Naive thymus-derived CD4-positive, alpha-beta T cell (primary cell): ENCODE measurements at regions of chr10 and their contacts with region 1.

Region 1: GRCh38 chr10:96719850-96720421 is 378 bp downstream of the PIK3AP1 start:
- DNase-seq: peak in 5 of 9 donors; percentile 2 to 52 (median 15)
- ATAC-seq: peak; percentile 77
- H3K4me3 ChIP-seq: peak overlapping the region; percentile 58
- H3K4me3 Mint-ChIP-seq: peak overlapping the region; percentile 84 to 98 (median 92)
- H3K27ac ChIP-seq: no peak overlapping the region
- H3K27ac Mint-ChIP-seq: peak overlapping the region in 7 of 9 donors; percentile 20 to 77 (median 69)
- H3K4me1 ChIP-seq: peaks cover 6 to 20% of the 10 kb centered on the region in 2 donors
- H3K4me1 Mint-ChIP-seq: peaks cover 17 to 35% (median 26%) of the 10 kb centered on the region in 7 donors
- H3K27me3 ChIP-seq: no peaks in the 10 kb centered on the region
- H3K27me3 Mint-ChIP-seq: peaks cover 0 to 24% (median 4%) of the 10 kb centered on the region in 5 donors

Region 2: DNA sequence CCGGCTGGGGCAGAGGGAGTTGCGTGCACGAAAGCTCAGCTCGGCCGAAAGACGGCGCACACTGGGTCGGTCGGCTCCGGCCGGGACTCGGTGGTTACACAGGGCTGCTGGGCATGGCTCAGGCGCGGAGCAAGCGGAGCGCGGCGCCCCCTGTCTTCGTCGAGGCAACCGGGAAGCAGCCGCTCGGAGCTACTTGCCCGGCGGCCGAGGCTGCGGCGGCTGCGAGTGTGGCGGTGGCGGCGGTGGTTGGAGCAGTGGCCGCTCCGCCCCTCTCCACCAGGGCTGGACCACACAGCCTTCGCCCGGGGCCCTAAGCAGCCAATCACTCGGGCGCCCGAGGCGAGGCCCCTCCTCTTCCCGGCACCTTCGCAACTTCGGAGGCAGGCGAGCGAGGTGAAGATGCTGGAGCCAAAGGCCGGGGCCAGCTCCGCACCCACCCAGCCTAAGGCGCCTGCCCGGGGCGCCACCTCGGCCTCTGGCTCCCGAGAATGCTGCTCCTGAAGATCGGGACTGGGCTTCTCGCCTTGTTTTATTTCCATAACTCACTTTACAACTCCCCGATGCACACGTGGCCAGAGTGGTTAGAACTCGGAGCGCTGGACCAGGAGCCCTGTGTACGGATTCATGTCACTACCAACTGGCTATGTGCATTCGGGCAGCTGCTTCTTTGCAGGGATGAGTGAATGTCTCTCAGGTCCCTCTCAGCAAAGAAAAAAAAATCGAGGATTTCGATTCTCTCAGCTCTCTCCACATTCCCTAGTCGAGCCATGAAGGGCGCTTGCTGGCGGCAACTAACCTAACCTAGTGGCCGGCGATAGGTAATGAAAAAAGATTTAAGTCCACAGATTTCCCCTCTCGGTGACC is 206.0 kb before region 1 on chr10 and contains the start of gene TLL2:
- CTCF ChIA-PET with region 1: no interaction called
- POLR2A ChIA-PET with region 1: no interaction called
- intact Hi-C with region 1: loop called in 1 of 2 experiments (anchors 5 kb)
- DNase-seq: peak; percentile 1 to 74 (median 33)
- ATAC-seq: peak; percentile 83
- H3K4me3 ChIP-seq: peak within 1 kb of the TSS; percentile 48
- H3K4me3 Mint-ChIP-seq: peak within 1 kb of the TSS; percentile 75 to 86 (median 80)
- H3K27ac ChIP-seq: no peak within 1 kb of the TSS
- H3K27ac Mint-ChIP-seq: peak within 1 kb of the TSS in 1 of 9 donors; percentile 37
- H3K4me1 ChIP-seq: peaks cover 0 to 9% of the 10 kb centered on the region in 2 donors
- H3K4me1 Mint-ChIP-seq: peaks cover 8 to 24% (median 18%) of the 10 kb centered on the region in 7 donors
- H3K27me3 ChIP-seq: peaks cover 0 to 6% of the 10 kb centered on the region in 2 donors
- H3K27me3 Mint-ChIP-seq: peaks cover 29 to 61% (median 36%) of the 10 kb centered on the region in 5 donors
- total RNA-seq, gene TLL2: 0.24 TPM in 1 of 5 experiments, not detected in the others

Region 3: GRCh38 chr10:96642973-96643372 is 77.0 kb before region 1 on chr10:
- CTCF ChIA-PET with region 1: no interaction called
- POLR2A ChIA-PET with region 1: no interaction called
- intact Hi-C with region 1: loop called (anchors 2 kb)
- DNase-seq: peak in 2 of 9 donors; percentile 33 to 57
- ATAC-seq: peak; percentile 63
- H3K4me3 ChIP-seq: no peak overlapping the region
- H3K4me3 Mint-ChIP-seq: no peak overlapping the region
- H3K27ac ChIP-seq: no peak overlapping the region
- H3K27ac Mint-ChIP-seq: no peak overlapping the region
- H3K4me1 ChIP-seq: no peaks in the 10 kb centered on the region
- H3K4me1 Mint-ChIP-seq: peaks cover 0 to 22% (median 4%) of the 10 kb centered on the region in 7 donors
- H3K27me3 ChIP-seq: no peaks in the 10 kb centered on the region
- H3K27me3 Mint-ChIP-seq: peaks cover 0 to 8% (median 0%) of the 10 kb centered on the region in 5 donors

Region 4: GRCh38 chr10:96747734-96748550 is 28.0 kb after region 1 on chr10:
- CTCF ChIA-PET with region 1: no interaction called
- POLR2A ChIA-PET with region 1: no interaction called
- intact Hi-C with region 1: loop called in 1 of 2 experiments (anchors 2 kb)
- DNase-seq: no peak
- ATAC-seq: peak; percentile 68
- H3K4me3 ChIP-seq: no peak overlapping the region
- H3K4me3 Mint-ChIP-seq: peak overlapping the region in 1 of 10 donors; percentile 55
- H3K27ac ChIP-seq: no peak overlapping the region
- H3K27ac Mint-ChIP-seq: peak overlapping the region in 2 of 9 donors; percentile 63 to 80
- H3K4me1 ChIP-seq: no peaks in the 10 kb centered on the region
- H3K4me1 Mint-ChIP-seq: peaks cover 0 to 15% (median 6%) of the 10 kb centered on the region in 7 donors
- H3K27me3 ChIP-seq: no peaks in the 10 kb centered on the region
- H3K27me3 Mint-ChIP-seq: peaks cover 0 to 8% (median 0%) of the 10 kb centered on the region in 5 donors

Region 5: GRCh38 chr10:96991313-96991841 is 271.4 kb after region 1 on chr10:
- CTCF ChIA-PET with region 1: no interaction called
- POLR2A ChIA-PET with region 1: no interaction called
- intact Hi-C with region 1: no loop called
- DNase-seq: no peak
- ATAC-seq: no peak
- H3K4me3 ChIP-seq: no peak overlapping the region
- H3K4me3 Mint-ChIP-seq: no peak overlapping the region
- H3K27ac ChIP-seq: no peak overlapping the region
- H3K27ac Mint-ChIP-seq: no peak overlapping the region
- H3K4me1 ChIP-seq: no peaks in the 10 kb centered on the region
- H3K4me1 Mint-ChIP-seq: peaks cover 0 to 5% (median 0%) of the 10 kb centered on the region in 7 donors
- H3K27me3 ChIP-seq: no peaks in the 10 kb centered on the region
- H3K27me3 Mint-ChIP-seq: no peaks in the 10 kb centered on the region